HepG2 (cell line): ENCODE measurements at regions of chr6 and their contacts with region 1.

Region 1: DNA sequence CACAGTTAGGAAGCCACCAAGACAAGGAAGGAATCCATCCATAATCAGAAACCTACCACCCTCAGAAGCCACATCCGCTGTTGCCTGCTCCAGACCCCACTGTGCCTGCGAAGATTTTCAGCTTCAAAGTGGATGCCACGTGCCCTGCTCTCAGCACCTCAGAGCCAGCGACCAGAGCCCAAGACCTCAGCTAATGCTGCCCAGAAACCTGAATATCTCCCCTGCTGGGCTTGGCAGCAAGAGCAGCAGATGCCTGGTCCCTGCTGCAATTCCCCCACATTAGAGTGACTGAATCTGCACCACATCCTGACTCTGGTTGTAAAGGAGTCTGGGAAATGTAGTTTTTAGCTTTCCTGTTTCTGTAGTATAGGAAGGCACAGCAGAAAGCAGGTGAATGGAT is 10.7 kb upstream of the ULBP3 start:
- DNase-seq: no peak
- ATAC-seq: no peak
- H3K4me3 ChIP-seq: no peak overlapping the region
- H3K27ac ChIP-seq: no peak overlapping the region
- H3K4me1 ChIP-seq: no peaks in the 10 kb centered on the region
- H3K27me3 ChIP-seq: peaks cover 0 to 9% of the 10 kb centered on the region in 2 experiments; a peak in 1 of 5 replicates
- CTCF ChIP-seq: no peak
- EP300 ChIP-seq: no peak
- POLR2A ChIP-seq: no peak
- RAD21 ChIP-seq: no peak

Region 2: GRCh38 chr6:150334790-150335783 is 255.5 kb after region 1 on chr6:
- CTCF ChIA-PET with region 1: interaction called, 40 read pairs
- POLR2A ChIA-PET with region 1: no interaction called
- in situ Hi-C with region 1: loop called (anchors 5 kb)
- intact Hi-C with region 1: loop called (anchors 1 kb)
- DNase-seq: peak; percentile 52
- ATAC-seq: peak; percentile 50; the same call in 1 of the 3 replicates
- H3K4me3 ChIP-seq: no peak overlapping the region
- H3K27ac ChIP-seq: no peak overlapping the region
- H3K4me1 ChIP-seq: no peaks in the 10 kb centered on the region
- H3K27me3 ChIP-seq: peaks cover 0 to 8% of the 10 kb centered on the region in 2 experiments; a peak in 2 of 5 replicates
- CTCF ChIP-seq: peak; percentile 73
- EP300 ChIP-seq: no peak
- POLR2A ChIP-seq: no peak
- RAD21 ChIP-seq: peak; percentile 71

Region 3: DNA sequence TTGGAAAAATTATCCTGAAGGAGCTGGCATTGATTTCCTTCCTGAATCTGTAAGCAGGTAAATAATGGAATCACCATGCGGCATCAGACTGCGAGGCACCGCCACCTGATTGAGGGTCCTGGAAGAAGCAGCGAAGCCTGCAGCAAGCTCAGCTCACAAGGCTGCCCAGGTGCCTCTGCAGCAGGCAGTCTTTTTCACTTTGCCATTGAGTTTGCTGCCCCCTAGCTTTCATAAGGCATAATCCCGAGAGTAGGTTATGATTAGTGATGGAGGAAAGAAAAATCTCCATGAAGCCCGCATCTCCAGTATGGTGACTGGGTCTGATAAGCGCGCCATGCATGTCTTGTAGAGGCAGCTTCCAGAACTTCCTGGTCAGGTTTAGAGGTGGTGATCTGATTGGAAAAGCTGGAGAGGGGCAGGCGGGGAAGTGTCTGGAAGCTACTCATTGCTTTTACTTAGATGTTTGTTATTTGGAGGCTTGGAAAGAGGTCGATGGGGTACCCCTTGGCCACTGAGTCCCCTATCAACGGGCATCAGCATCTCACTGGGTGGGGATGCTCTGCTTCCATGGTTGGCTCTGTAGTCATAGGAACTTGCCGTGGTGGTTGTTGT is 315.9 kb after region 1 on chr6:
- CTCF ChIA-PET with region 1: interaction called, 18 read pairs
- POLR2A ChIA-PET with region 1: no interaction called
- in situ Hi-C with region 1: no loop called
- intact Hi-C with region 1: loop called (anchors 1 kb)
- DNase-seq: peak; percentile 60
- ATAC-seq: peak; percentile 96
- H3K4me3 ChIP-seq: no peak overlapping the region
- H3K27ac ChIP-seq: no peak overlapping the region
- H3K4me1 ChIP-seq: no peaks in the 10 kb centered on the region
- H3K27me3 ChIP-seq: peaks cover 0 to 6% of the 10 kb centered on the region in 2 experiments; a peak in 2 of 5 replicates
- CTCF ChIP-seq: peak; percentile 83
- EP300 ChIP-seq: no peak
- POLR2A ChIP-seq: no peak
- RAD21 ChIP-seq: peak; percentile 56